ENCODE measurements at regions of chr5 and their contacts with region 1.

Region 1: GRCh38 chr5:151719228-151720000 is 32.7 kb upstream of the SPARC start:
- DNase-seq: no peak
- H3K4me3 ChIP-seq: no peak overlapping the region
- H3K27me3 ChIP-seq: no peaks in the 10 kb centered on the region
- CTCF ChIP-seq: peak; percentile 63

Region 2: GRCh38 chr5:151298063-151298855 is 421.2 kb before region 1 on chr5:
- CTCF ChIA-PET with region 1: no interaction called
- POLR2A ChIA-PET with region 1: no interaction called
- DNase-seq: peak; percentile 7
- H3K4me3 ChIP-seq: no peak overlapping the region
- H3K27me3 ChIP-seq: peaks cover 3% of the 10 kb centered on the region
- CTCF ChIP-seq: peak; percentile 64

Region 3: DNA sequence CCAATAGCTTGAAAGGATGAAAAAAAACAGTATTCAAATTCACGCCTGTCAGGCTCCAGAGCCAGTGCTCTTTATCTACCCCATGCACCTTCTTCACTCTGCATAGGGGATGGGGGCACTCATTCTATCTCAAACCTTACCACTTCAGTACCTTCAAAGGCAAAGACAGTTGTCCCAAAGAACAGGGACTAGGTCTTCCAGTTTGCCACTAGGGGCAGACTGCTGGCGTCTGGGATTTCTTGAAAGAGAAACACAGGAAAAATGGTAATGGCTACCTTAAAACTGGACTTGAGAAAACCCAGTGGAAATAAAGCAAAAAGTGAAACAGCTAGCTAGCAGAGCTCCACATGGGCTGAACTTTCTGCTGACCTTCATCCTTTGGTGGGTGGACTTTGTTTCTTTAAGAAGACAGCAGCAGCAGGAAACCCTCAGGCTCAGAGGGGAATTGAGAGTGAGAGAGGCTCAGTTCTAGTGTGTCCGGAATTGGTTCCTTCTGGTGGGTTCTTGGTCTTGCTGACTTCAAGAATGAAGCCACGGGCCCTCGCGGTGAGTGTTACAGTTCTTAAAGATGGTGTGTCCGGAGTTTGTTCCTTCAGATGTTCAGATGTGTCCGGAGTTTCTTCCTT is 313.0 kb before region 1 on chr5:
- CTCF ChIA-PET with region 1: no interaction called
- POLR2A ChIA-PET with region 1: no interaction called
- DNase-seq: no peak
- H3K4me3 ChIP-seq: no peak overlapping the region
- H3K27me3 ChIP-seq: no peaks in the 10 kb centered on the region
- CTCF ChIP-seq: peak; percentile 53

Region 4: DNA sequence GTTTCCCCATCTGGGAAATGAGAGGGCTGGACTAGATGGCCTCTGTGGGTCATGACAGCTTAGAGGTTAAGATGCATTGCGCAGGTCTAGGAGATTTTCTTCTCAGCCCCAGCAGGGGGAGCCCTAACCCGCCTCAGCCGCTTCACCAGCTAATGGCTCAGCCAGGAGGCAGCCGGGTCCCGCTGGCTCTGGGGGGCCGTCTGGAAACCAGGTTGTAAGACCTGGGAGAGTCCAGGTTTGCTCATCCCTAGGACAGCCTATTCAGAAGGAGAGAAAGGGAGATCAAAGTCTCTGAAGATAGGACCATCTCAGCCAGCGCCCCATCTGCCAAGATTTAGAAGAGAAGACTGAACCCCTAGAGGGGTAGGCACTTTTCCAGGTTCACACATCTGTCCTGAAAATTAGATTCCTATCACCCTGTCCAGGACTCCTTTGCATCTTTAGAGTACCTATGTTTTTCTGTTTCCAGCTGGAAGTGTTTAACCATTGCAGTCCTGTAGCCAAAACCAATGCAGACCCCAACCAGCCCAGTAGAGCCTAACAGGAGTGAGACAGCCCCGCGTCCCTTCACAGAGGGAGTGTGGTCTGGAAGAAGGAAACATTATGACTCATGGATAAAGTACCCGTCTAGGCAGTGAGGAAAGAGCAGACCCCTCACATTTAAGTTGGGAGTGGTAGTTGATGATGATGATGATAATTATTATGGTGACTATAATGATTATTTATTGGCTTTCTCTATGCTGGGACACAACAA is 60.2 kb before region 1 on chr5:
- CTCF ChIA-PET with region 1: interaction called, 40 read pairs
- POLR2A ChIA-PET with region 1: interaction called, 4 read pairs
- DNase-seq: no peak
- H3K4me3 ChIP-seq: no peak overlapping the region
- H3K27me3 ChIP-seq: no peaks in the 10 kb centered on the region
- CTCF ChIP-seq: peak; percentile 85

Region 5: GRCh38 chr5:151675611-151676313 is 43.7 kb before region 1 on chr5:
- CTCF ChIA-PET with region 1: interaction called, 54 read pairs
- POLR2A ChIA-PET with region 1: no interaction called
- DNase-seq: no peak
- H3K4me3 ChIP-seq: no peak overlapping the region
- H3K27me3 ChIP-seq: no peaks in the 10 kb centered on the region
- CTCF ChIP-seq: no peak

Region 6: DNA sequence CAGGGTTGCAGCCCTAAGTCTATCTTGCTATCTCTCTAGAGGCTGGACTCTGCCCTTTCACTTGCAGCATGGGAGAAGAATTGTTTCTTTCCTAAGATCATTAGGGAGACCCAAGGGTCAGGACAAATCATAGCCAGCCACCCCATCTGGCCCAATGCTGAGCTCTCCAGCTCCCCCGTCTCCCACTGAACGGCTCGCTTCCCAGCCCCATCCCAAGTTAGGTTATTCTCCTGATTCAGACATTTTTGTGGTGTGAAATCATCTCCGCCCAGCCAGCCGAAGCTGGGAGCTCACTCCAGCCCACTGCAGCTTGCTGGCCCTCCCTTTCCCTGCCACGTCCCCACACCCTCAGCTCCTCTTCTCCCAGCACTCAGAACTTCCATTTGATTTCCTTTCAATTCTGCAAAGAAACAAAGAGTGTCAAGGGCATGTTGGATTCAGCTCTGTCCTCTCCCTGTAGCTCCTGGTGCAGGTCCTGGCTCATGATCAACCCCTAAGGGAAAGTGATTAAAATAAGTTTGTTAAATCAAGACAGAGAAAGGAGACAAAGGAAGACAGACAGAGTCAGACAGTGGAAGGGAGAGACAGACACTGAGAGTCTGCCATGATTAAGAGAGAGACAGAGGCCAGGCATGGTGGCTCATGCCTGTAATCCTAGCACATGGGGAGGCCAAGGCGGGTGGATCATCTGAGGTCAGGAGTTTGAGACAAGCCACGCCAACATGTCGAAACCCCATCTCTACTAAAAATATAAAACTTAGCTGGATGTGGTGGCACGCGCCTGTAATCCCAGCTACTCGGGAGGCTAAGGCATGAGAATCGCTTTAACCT is 20.1 kb before region 1 on chr5:
- CTCF ChIA-PET with region 1: interaction called, 14 read pairs
- POLR2A ChIA-PET with region 1: interaction called, 6 read pairs
- DNase-seq: peak; percentile 93
- H3K4me3 ChIP-seq: no peak overlapping the region
- H3K27me3 ChIP-seq: no peaks in the 10 kb centered on the region
- CTCF ChIP-seq: no peak

Measured in BJ (cell line).